Activated T-helper 1 cell treated with anti-CD3 and anti-CD28 coated beads, Interleukin-12 subunit alpha, Interleukin-12 subunit beta, Interleukin-2, Interleukin-4 antibody, amounts not matched to agents 30 ng/mL and 10 ng/mL and 1 ng/mL, durations not matched to agents 14 hours and 24 hours and 36 hours (primary cell): ENCODE measurements at regions of chr12 and their contacts with region 1.

Region 1: DNA sequence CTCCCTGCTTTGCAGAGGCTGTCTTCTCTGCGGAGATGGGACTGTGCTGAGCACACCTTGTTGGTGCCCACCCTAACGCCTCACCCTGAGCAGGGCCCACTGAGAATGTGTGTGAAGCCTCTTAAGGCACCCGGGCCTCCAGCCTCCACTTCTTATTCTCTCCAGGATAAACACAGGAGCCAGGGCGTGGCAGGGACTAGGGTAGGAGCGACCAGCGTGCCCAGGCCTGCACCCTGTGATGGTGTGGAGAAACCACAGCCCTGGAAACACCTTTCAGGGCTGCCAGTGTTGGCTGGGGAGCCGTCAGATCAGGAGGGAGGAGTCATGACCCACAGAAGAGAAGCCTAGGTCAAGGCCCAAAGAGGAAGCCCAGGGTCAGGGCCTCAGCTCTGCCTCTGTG is 41.3 kb downstream of the VDR start:
- DNase-seq: no peak
- H3K4me3 Mint-ChIP-seq: no peak overlapping the region
- H3K27ac Mint-ChIP-seq: peak overlapping the region; percentile 80
- H3K4me1 Mint-ChIP-seq: peaks cover 92% of the 10 kb centered on the region
- H3K27me3 Mint-ChIP-seq: no peaks in the 10 kb centered on the region

Region 2: DNA sequence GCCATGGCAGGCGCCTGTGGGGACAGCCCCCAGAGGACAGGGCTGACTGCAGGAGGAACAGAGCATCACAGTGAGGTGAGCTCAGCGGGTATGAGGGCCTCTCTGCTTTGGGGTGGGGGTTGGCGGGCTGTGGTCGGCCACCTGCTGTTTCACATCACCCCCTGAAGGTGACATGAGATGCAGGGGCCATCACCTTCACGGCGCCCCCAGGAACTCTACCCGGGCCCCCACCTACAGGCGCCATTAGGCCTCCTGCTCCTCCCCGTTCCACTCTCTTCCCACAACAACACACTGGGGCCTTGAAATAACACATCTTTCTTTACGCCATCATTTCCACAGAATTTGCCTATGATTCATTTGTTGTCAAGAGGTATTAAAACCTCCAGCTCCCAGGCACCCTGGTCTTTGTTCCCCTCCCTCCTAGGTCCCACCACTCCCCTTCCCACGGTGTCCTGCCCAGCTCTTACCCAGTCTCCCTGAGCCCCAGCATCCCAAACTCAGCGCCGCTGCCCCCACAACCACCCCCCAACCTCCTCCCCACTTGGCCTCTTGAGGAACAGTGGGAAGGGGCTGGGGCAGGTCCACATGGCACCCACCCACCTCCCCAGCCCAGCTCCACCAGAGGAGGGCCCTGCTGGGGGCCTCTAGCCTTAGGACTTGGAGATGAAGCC is 31.1 kb before region 1 on chr12:
- intact Hi-C with region 1: loop called (anchors 1 kb)
- DNase-seq: no peak
- H3K4me3 Mint-ChIP-seq: peak overlapping the region; percentile 75
- H3K27ac Mint-ChIP-seq: peak overlapping the region; percentile 98
- H3K4me1 Mint-ChIP-seq: peaks cover 93% of the 10 kb centered on the region
- H3K27me3 Mint-ChIP-seq: no peaks in the 10 kb centered on the region

Region 3: GRCh38 chr12:47850153-47851084 is 13.0 kb before region 1 on chr12:
- intact Hi-C with region 1: no loop called
- DNase-seq: no peak
- H3K4me3 Mint-ChIP-seq: no peak overlapping the region
- H3K27ac Mint-ChIP-seq: peak overlapping the region; percentile 59
- H3K4me1 Mint-ChIP-seq: peaks cover 37% of the 10 kb centered on the region
- H3K27me3 Mint-ChIP-seq: no peaks in the 10 kb centered on the region

Region 4: DNA sequence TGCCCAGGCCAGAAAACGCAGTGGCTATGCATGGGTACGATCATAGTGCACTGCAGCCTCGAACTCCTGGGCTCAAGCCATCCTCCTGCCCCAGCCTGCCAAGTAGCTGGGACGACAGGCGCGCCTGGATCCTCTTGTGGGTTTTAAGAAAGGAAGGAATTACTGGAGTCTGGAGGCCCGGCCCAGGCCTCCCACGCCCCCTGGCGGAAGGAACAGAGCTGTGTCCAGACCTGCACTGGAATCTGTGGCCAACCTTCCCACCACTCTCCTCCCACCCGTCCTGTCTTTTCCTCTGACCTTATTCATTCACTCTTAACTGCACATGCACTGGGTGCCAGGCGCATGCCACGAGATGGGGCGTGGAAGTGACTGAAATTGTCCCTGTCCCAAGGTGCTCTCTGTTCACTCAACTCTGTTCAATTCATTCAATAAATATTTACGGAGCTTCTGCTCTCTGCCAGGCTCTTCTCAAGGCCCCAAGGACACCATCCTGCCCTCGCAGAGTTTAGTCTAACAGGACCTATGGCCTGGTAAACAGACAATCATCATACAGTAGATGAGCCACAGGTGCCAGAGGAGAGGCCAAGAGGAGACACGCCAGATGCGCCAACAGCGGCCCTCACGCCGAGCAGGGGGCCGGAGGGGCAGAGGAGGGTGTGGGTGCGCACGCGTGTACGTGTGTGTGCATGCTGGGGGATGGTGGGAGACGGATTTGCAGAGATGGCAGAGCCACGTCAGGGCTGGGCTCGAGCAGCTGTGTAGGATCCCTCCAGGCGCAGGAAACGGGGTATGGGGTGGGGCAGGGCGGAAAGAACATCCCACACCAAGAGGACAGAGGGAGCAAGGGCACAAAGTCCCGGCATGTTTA is 86.2 kb after region 1 on chr12:
- intact Hi-C with region 1: loop called (anchors 5 kb)
- DNase-seq: peak; percentile 41
- H3K4me3 Mint-ChIP-seq: no peak overlapping the region
- H3K27ac Mint-ChIP-seq: peak overlapping the region; percentile 42
- H3K4me1 Mint-ChIP-seq: peaks cover 23% of the 10 kb centered on the region
- H3K27me3 Mint-ChIP-seq: peaks cover 18% of the 10 kb centered on the region